Transverse colon (tissue), 4 donors: ENCODE measurements at regions of chr9 and their contacts with region 1.

Region 1: DNA sequence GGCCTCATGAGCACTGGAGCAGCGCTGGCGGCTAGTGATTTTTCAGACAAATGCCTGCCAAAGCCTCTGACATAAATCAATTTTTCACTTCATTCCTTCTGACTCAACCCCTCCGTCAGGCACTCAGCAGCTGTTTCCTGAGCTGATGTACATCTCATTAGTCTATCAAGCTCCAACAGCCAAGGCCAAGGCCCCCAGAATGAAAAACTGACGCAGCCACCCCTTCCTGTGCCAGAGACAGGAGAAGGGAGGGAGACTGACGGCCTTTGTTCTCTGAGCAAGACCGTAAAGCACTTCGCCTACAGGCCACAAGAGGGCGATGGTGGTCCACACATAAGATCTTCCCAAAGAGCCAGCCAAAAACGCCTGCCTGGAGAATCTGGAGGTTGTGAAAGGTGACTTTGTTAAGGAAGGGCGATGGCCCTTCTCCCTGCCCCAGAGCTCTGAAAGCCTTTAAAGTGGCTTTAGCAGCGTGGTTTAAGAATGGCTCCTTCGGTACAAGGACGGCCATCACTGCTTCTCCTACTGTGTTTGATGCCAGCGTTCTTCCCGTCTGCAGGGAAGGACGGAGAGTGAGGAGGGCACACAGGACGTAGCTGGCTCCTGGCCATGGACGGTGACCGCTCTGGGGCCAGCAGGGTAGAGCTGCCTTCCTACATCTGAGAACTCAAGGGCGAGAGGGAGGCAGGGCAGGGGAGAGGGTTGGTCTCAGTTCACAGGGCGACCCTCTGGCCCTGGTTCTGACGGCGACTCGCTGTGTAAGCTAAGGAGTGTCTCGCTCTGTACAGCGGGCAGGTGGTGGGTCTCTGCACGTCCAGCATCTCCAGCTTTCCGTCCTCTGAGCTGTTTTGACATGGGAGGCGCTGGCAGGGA is 37.0 kb downstream of the ALG2 start:
- DNase-seq: peak; percentile 87
- H3K4me3 ChIP-seq: peak overlapping the region in 3 of 4 donors; percentile 5 to 43 (median 26)
- H3K27ac ChIP-seq: peak overlapping the region in 2 of 4 donors; percentile 24 to 31
- H3K4me1 ChIP-seq: peaks cover 4 to 10% (median 5%) of the 10 kb centered on the region in 4 donors
- H3K27me3 ChIP-seq: no peaks in the 10 kb centered on the region
- CTCF ChIP-seq: peak; percentile 91 to 95 (median 91)
- EP300 ChIP-seq: no peak
- POLR2A ChIP-seq: no peak

Region 2: GRCh38 chr9:98989036-98990000 is 195.4 kb before region 1 on chr9:
- in situ Hi-C with region 1: no loop called
- intact Hi-C with region 1: no loop called
- DNase-seq: peak; percentile 47
- H3K4me3 ChIP-seq: no peak overlapping the region
- H3K27ac ChIP-seq: peak overlapping the region; percentile 44 to 73 (median 67)
- H3K4me1 ChIP-seq: peaks cover 0 to 31% (median 12%) of the 10 kb centered on the region in 4 donors
- H3K27me3 ChIP-seq: no peaks in the 10 kb centered on the region
- CTCF ChIP-seq: no peak
- EP300 ChIP-seq: no peak
- POLR2A ChIP-seq: no peak

Region 3: DNA sequence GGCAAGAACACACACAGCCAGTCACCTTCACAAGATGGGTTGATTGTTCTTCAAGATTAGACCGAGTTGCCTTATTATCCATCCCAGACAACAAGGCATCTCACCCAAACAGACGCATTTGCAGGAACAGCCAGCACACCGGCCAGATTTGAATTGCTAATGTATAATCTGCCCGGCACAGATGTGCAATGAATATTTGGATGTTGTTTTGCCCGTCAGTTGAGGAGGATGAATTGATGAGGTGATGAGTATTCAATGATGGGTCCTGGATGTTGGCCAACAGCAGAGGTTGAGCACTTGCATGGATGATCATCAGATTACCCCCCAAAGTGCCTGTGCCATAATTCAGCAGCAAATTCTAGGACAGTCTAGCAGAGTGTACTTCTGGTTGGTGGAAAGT is 16.9 kb after region 1 on chr9:
- in situ Hi-C with region 1: no loop called
- intact Hi-C with region 1: no loop called
- DNase-seq: no peak
- H3K4me3 ChIP-seq: no peak overlapping the region
- H3K27ac ChIP-seq: no peak overlapping the region
- H3K4me1 ChIP-seq: no peaks in the 10 kb centered on the region
- H3K27me3 ChIP-seq: no peaks in the 10 kb centered on the region
- CTCF ChIP-seq: no peak
- EP300 ChIP-seq: no peak
- POLR2A ChIP-seq: no peak

Region 4: GRCh38 chr9:100011062-100011681 is 826.5 kb after region 1 on chr9:
- in situ Hi-C with region 1: loop called in 1 of 4 experiments (anchors 25 kb)
- intact Hi-C with region 1: no loop called
- DNase-seq: no peak
- H3K4me3 ChIP-seq: no peak overlapping the region
- H3K27ac ChIP-seq: no peak overlapping the region
- H3K4me1 ChIP-seq: no peaks in the 10 kb centered on the region
- H3K27me3 ChIP-seq: no peaks in the 10 kb centered on the region
- CTCF ChIP-seq: peak; percentile 43 to 72 (median 51)
- EP300 ChIP-seq: no peak
- POLR2A ChIP-seq: no peak